K562 (cell line): ENCODE measurements at regions of chr11 and their contacts with region 1.

Region 1: DNA sequence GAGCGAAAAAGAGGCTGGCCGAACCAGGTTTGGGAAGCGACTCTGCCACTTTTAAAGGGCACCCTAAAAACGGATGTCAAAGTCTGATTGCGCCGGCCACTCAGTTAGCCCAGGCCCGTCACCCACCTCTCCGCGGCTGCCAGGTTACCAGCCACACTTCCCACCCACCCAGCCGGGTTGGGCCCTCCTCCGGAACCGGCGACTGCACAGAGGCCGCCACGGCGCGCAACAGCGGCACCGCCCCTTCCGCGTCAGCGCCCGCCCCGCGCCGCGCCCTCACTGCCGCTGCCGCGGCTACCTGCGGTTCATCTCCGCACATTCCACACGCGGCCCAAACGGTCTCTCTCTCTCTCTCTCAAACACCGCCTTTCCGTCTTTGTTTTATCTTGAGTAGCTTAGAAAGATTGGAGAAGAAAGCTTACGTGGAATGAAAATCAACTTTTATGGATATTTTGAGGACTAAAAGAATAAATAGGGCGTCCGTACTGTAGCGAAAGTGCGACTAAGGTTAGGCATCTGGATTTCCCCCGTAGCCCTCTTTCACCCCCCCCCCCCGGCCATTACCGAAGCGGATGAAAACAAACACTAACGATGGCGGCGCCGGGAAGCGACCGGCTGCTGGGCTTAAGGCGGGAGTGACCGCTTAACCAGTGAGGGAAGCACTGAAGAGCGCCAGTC is at the starts of genes ATG13 and HARBI1:
- DNase-seq: peak; percentile 89 to 92 (median 91)
- ATAC-seq: peak; percentile 92
- H3K4me3 ChIP-seq: peak within 1 kb of the TSS; percentile 99
- H3K27ac ChIP-seq: peak within 1 kb of the TSS; percentile 100
- H3K4me1 ChIP-seq: peaks cover 17 to 18% of the 10 kb centered on the region in 2 experiments; a peak in 4 of 5 replicates
- H3K27me3 ChIP-seq: no peaks in the 10 kb centered on the region
- CTCF ChIP-seq: no peak
- EP300 ChIP-seq: peak; percentile 99
- POLR2A ChIP-seq: 0 out of 2 replicates have a peak, but pooled peaks have one; percentile 71
- RAD21 ChIP-seq: no peak
- polyA plus RNA-seq, gene ATG13: 13.1 to 15.6 TPM
- polyA plus RNA-seq, gene HARBI1: 6.0 to 8.4 TPM

Region 2: GRCh38 chr11:46560300-46560991 is 56.7 kb before region 1 on chr11:
- CTCF ChIA-PET with region 1: no interaction called
- POLR2A ChIA-PET with region 1: interaction called, 3 read pairs
- in situ Hi-C with region 1: no loop called
- intact Hi-C with region 1: loop called (anchors 5 kb)
- DNase-seq: peak in 1 of 4 experiments; percentile 29
- ATAC-seq: peak; percentile 39
- H3K4me3 ChIP-seq: peak overlapping the region; percentile 20
- H3K27ac ChIP-seq: peak overlapping the region; percentile 70
- H3K4me1 ChIP-seq: peaks cover 17 to 27% of the 10 kb centered on the region in 2 experiments
- H3K27me3 ChIP-seq: no peaks in the 10 kb centered on the region
- CTCF ChIP-seq: no peak
- EP300 ChIP-seq: no peak
- POLR2A ChIP-seq: no peak
- RAD21 ChIP-seq: no peak

Region 3: DNA sequence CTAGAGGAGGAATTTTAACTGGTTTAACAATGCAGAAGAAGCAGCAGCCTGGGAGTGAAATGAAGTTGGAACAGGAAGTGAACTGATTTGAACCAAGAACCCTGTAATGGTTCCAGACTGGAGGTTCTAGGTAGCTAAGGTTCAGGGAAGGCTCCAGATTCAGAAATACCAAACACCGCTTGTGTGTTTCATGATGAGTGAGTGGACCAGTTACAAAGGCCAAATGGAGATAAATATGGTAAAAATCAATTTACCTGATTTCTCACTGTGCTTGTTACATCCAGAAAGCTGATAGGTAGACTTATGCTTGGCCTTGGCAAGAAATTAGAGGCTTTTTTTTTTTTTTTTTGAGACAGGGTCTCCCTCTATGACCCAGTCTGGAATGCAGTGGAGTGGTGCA is 13.1 kb after region 1 on chr11:
- CTCF ChIA-PET with region 1: no interaction called
- POLR2A ChIA-PET with region 1: interaction called, 10 read pairs
- in situ Hi-C with region 1: no loop called
- intact Hi-C with region 1: no loop called
- DNase-seq: no peak
- ATAC-seq: no peak
- H3K4me3 ChIP-seq: no peak overlapping the region
- H3K27ac ChIP-seq: no peak overlapping the region
- H3K4me1 ChIP-seq: no peaks in the 10 kb centered on the region
- H3K27me3 ChIP-seq: no peaks in the 10 kb centered on the region
- CTCF ChIP-seq: no peak
- EP300 ChIP-seq: no peak
- POLR2A ChIP-seq: no peak
- RAD21 ChIP-seq: no peak